GM12878 (cell line): ENCODE measurements at regions of chr1 and their contacts with region 1.

Region 1: DNA sequence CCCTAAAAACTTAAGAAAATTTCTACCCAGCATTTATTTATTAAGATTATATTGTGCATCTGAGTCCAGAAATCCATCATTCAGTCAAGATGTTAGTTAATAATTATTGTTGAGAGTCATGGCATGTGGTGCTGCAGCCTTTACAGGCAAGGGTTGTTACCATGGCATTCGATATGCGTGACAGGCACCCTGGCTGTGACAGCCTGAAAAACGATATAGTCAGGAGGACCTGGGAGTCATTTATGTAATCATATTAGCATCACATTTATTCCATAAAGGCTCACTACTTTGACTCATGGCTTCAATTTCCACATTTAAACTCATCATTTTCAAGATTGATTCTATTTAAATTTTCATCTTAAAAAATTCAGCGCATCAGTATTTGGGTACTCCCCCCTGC is 68.0 kb downstream of the CACHD1 start:
- DNase-seq: no peak
- ATAC-seq: no peak
- H3K4me3 ChIP-seq: no peak overlapping the region
- H3K27ac ChIP-seq: no peak overlapping the region
- H3K4me1 ChIP-seq: no peaks in the 10 kb centered on the region
- H3K27me3 ChIP-seq: no peaks in the 10 kb centered on the region; a peak in 1 of 4 replicates
- CTCF ChIP-seq: no peak
- EP300 ChIP-seq: no peak
- POLR2A ChIP-seq: no peak
- RAD21 ChIP-seq: no peak

Region 2: DNA sequence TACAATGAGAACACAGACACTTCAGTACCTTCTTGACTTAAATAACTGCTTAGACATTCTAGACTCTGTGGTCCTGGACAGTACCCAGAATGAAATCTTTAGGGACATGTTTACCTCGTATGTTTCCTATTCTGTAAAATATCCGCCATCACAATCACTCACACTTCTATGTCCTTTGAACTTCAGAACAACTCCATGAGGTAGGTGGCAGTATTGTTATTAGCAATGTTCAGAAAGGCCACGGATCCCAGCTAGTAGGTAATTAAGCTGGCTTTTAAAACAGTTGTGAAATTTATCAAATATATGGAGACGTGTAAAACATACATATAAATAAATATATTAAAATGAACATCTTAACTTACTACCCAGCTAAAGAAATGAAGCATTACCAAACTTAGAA is 15.3 kb after region 1 on chr1:
- CTCF ChIA-PET with region 1: no interaction called
- POLR2A ChIA-PET with region 1: interaction called, 3 read pairs
- RAD21 ChIA-PET with region 1: no interaction called
- SMC1A ChIA-PET with region 1: no interaction called
- in situ Hi-C with region 1: no loop called
- intact Hi-C with region 1: loop called (anchors 1 kb)
- DNase-seq: no peak
- ATAC-seq: no peak
- H3K4me3 ChIP-seq: no peak overlapping the region
- H3K27ac ChIP-seq: no peak overlapping the region
- H3K4me1 ChIP-seq: no peaks in the 10 kb centered on the region
- H3K27me3 ChIP-seq: no peaks in the 10 kb centered on the region; a peak in 1 of 4 replicates
- CTCF ChIP-seq: 0 out of 6 replicates have a peak, but pooled peaks of 1 of the 3 experiments have one; percentile 8
- EP300 ChIP-seq: no peak
- POLR2A ChIP-seq: no peak
- RAD21 ChIP-seq: peak; percentile 24; the same call in 1 of the 2 replicates

Region 3: GRCh38 chr1:64631346-64632034 is 93.5 kb after region 1 on chr1:
- CTCF ChIA-PET with region 1: no interaction called
- POLR2A ChIA-PET with region 1: no interaction called
- RAD21 ChIA-PET with region 1: no interaction called
- SMC1A ChIA-PET with region 1: no interaction called
- in situ Hi-C with region 1: no loop called
- intact Hi-C with region 1: no loop called
- DNase-seq: no peak
- ATAC-seq: no peak
- H3K4me3 ChIP-seq: no peak overlapping the region
- H3K27ac ChIP-seq: no peak overlapping the region
- H3K4me1 ChIP-seq: no peaks in the 10 kb centered on the region
- H3K27me3 ChIP-seq: no peaks in the 10 kb centered on the region; a peak in 1 of 4 replicates
- CTCF ChIP-seq: no peak
- EP300 ChIP-seq: no peak
- POLR2A ChIP-seq: no peak
- RAD21 ChIP-seq: no peak